Activated CD8-positive, alpha-beta T cell treated with anti-CD3 and anti-CD28 coated beads, Interleukin-2, amount 10 ng/mL, durations not matched to agents 7 days and 5 days (primary cell): ENCODE measurements at regions of chr19 and their contacts with region 1.

Region 1: GRCh38 chr19:18571564-18572300 is at the start of gene UBA52:
- DNase-seq: peak; percentile 99
- ATAC-seq: peak; percentile 92
- H3K4me3 Mint-ChIP-seq: peak within 1 kb of the TSS; percentile 80
- H3K27ac Mint-ChIP-seq: peak within 1 kb of the TSS; percentile 89
- H3K4me1 Mint-ChIP-seq: peaks cover 31% of the 10 kb centered on the region
- H3K27me3 Mint-ChIP-seq: no peaks in the 10 kb centered on the region
- total RNA-seq, gene UBA52: 1,452 to 1,556 TPM

Region 2: GRCh38 chr19:18469069-18469846 is 102.5 kb before region 1 on chr19:
- CTCF ChIA-PET with region 1: interaction called, 13 read pairs
- POLR2A ChIA-PET with region 1: no interaction called
- DNase-seq: peak; percentile 69
- ATAC-seq: peak; percentile 49
- H3K4me3 Mint-ChIP-seq: no peak overlapping the region
- H3K27ac Mint-ChIP-seq: no peak overlapping the region
- H3K4me1 Mint-ChIP-seq: peaks cover 32% of the 10 kb centered on the region
- H3K27me3 Mint-ChIP-seq: no peaks in the 10 kb centered on the region

Region 3: DNA sequence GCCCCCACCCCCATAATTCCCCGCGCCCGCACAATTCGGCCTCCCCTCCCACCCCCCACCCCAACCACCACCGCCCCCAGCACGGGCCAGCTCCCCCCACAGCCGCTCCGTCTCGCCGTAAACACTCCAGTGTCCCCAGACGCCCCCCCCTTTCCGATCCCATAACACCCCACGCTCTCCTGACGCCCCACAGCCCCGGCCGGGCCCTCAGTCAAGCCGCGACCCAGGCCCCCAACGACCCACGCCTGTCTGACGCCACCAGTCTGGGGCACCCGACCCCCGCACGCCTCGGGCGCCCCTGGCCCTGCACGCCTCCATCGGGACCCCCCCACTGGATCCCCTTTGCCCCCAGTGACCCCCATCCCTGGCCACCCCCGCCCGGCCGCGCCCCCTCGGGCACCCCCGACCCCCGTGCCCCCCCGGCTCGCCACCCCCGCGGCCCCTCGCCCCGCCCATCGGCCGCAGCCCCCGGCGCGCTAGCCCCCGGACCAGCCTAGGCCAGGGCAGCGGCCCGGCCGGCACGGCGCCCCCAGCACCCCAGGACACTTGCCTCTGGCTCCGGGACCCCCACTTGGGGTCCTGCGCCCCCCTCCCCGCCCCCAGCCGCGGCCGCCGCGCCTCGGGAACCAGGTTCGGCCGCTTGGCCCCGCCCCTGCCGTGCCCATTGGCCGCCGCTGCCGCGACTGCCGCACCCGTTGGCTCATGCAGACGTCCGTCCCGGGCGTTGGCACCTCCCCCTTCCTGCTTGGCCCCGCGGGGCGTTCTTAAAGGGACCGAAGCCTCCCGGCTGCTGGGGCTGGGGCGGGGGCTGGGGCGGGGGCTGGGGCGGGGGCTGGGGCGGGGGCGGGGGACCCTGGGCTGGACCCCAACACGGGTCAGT is 28.6 kb before region 1 on chr19 and contains the start of gene FKBP8:
- CTCF ChIA-PET with region 1: interaction called, 16 read pairs
- POLR2A ChIA-PET with region 1: interaction called, 31 read pairs
- DNase-seq: peak; percentile 97
- ATAC-seq: peak; percentile 98
- H3K4me3 Mint-ChIP-seq: peak within 1 kb of the TSS; percentile 93
- H3K27ac Mint-ChIP-seq: peak within 1 kb of the TSS; percentile 99
- H3K4me1 Mint-ChIP-seq: peaks cover 30% of the 10 kb centered on the region
- H3K27me3 Mint-ChIP-seq: no peaks in the 10 kb centered on the region
- total RNA-seq, gene FKBP8: 245 to 247 TPM

Region 4: DNA sequence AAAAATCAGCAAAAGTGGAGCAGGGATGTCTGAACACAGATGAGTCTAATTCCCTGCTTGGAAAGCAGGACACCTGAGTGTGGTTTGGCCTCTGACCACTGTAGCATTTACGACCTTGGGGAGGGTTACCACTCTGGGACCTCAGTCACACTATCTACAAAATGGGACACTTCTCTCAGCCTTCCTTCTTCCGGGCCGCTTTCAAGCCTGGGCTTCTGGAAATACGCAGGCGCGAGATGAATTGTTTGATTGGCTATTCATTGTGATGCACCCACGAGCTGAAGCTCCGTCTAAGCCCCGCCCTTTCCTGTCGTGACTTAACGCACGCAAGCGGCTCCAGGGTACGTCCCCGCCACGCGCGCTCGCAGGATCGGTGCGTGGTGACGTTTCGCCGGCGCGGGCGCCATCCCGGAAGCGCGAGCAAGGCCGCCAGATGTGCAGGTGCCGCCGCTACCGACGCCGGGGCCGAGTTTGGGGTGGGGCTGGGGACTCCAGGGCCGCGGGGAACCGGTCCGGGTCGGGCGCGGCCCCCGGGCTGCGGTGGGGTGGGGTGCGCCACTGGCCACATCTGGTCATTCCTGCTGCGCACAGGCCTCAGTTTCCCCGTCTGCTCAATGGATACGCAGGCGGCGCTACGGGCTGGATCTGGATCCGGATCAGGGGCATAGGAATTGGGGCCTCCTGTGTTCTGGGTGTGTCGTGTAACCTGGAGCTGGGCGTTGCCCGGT is 14.1 kb before region 1 on chr19 and contains the start of gene KXD1:
- CTCF ChIA-PET with region 1: interaction called, 14 read pairs
- POLR2A ChIA-PET with region 1: interaction called, 44 read pairs
- DNase-seq: peak; percentile 100
- ATAC-seq: peak; percentile 98
- H3K4me3 Mint-ChIP-seq: peak within 1 kb of the TSS; percentile 94
- H3K27ac Mint-ChIP-seq: peak within 1 kb of the TSS; percentile 94
- H3K4me1 Mint-ChIP-seq: peaks cover 26% of the 10 kb centered on the region
- H3K27me3 Mint-ChIP-seq: no peaks in the 10 kb centered on the region
- total RNA-seq, gene KXD1: 101 to 108 TPM

Region 5: DNA sequence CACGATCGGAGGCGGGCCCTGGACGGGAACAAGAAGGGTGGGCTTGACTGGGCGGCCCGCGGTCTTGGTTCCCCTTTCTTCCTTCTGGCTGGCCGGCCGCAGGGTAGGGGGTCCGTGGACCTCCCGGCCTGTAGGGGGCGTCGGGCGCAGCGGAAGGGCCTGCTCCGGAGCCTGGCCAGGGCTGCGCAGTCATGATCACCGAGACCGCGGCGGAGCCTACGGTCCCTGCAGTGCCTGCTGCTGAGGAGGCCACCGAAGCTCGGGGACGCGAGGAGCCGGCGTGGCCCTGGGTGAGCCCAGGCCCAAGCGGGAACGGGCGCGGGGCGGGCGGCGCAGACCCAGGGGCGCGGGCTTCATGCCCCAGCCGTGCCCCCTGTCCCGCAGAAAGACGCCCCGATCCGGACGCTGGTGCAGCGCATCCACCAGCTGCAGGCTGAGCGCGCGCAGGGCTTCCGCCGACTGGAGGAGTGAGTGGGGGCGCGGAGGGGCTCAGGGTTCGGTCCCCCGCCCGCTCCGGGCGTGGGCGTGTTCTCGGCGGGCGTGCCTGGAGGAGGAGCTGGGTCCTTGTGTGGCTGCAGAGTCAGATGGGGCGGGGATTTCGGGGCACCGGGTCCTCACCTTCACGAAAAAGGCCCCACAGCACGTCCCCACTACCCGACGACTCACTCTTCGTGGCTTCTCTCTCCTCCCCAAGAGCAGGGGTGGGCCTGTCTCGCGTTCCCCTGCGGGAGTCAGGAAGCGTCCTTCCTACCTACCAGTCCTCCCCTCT is 17.1 kb after region 1 on chr19 and contains the start of gene REX1BD:
- CTCF ChIA-PET with region 1: interaction called, 56 read pairs
- POLR2A ChIA-PET with region 1: interaction called, 82 read pairs
- DNase-seq: peak; percentile 93
- ATAC-seq: peak; percentile 79
- H3K4me3 Mint-ChIP-seq: peak within 1 kb of the TSS; percentile 83
- H3K27ac Mint-ChIP-seq: peak within 1 kb of the TSS; percentile 96
- H3K4me1 Mint-ChIP-seq: peaks cover 47% of the 10 kb centered on the region
- H3K27me3 Mint-ChIP-seq: no peaks in the 10 kb centered on the region
- total RNA-seq, gene REX1BD: 91.5 to 98.7 TPM

Region 6: GRCh38 chr19:18612772-18613588 is 41.2 kb after region 1 on chr19 and contains the start of gene TMEM59L:
- CTCF ChIA-PET with region 1: no interaction called
- POLR2A ChIA-PET with region 1: no interaction called
- DNase-seq: peak; percentile 39
- ATAC-seq: no peak
- H3K4me3 Mint-ChIP-seq: peak within 1 kb of the TSS; percentile 15
- H3K27ac Mint-ChIP-seq: no peak within 1 kb of the TSS
- H3K4me1 Mint-ChIP-seq: peaks cover 14% of the 10 kb centered on the region
- H3K27me3 Mint-ChIP-seq: peaks cover 66% of the 10 kb centered on the region
- total RNA-seq, gene TMEM59L: not detected

Region 7: DNA sequence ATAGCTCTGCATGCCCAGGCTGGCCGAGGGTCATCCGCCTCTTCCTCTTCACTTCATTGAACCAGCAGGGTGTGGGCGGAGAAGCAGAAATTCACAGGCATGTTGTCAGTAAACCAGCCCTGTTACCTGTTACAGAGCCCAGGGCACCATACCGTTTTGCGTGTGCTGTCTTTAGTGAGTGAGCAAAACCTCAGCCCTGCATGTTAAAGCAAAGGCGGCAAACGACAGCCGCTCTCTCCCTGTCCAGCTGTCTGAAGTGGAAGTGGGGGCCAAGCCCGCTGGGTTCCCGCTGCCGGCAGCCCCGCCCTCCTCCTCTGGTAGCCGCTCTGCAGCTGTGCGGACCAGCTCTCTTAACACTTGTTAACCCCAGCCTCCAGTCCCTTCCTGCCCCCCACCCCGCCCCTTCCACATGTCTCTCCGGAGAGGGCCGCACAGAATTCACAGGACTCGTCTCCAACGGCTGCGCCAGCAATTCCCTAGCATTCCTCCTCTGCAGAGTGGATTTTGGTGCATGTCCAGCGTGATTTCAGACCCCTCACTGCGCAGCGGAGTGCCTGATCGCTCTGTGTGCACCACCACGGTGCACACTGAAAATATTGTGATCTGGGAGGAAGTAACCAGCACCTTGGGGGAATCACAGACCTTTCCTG is 77.8 kb after region 1 on chr19:
- CTCF ChIA-PET with region 1: no interaction called
- POLR2A ChIA-PET with region 1: no interaction called
- DNase-seq: no peak
- ATAC-seq: no peak
- H3K4me3 Mint-ChIP-seq: no peak overlapping the region
- H3K27ac Mint-ChIP-seq: no peak overlapping the region
- H3K4me1 Mint-ChIP-seq: peaks cover 15% of the 10 kb centered on the region
- H3K27me3 Mint-ChIP-seq: no peaks in the 10 kb centered on the region